Common myeloid progenitor, CD34-positive (primary cell): ENCODE measurements at regions of chr5 and their contacts with region 1.

Region 1: DNA sequence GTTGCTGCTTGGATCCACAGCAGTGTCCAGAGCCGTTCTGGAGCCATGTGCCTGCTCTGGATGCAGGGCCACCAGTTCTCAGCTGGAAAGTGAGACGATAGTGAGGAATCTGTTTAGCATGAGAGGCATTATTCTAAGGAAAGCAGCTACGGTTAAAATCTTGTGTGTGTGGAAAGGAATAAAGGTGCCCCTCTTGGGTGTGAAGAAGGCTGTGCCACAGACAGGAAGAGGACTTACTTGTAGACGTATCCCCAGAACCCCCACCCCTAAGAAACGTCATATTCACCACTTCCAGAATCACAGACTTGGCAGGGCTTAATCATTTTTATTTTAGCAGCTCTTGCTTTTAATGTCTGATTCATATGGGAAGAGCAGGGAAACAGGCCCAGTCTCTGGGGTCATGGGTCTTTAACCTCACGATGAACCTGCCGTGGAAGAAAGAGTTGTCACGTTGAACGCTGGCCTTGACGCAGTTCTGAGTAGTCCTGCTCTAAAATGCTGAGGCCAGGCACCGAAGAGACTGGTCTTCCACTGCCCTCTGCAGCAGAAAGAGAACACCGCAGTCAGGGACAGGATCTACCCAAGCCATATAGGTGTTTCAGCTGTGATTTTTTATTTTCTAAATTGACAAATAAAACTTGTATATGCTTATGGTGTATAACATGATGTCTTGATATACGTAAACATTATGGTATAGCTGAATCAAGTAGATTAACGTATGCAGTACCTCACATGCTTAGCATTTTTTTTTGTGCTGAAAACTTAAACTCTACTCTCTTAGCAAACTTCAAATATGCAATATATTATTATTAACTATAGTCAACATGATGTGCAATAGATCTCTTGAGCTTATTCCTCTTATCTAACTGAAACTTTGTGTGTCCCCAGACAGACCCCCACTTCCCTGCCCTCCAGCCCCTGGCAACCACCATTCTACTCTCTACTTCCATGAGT is 38.8 kb downstream of the CARTPT start:
- DNase-seq: peak; percentile 54 to 76 (median 74)
- H3K4me3 ChIP-seq: peak overlapping the region in 5 of 7 experiments; percentile 5 to 58 (median 42)
- H3K27ac ChIP-seq: no peak overlapping the region
- H3K4me1 ChIP-seq: peaks cover 0 to 4% (median 0%) of the 10 kb centered on the region in 4 experiments
- H3K27me3 ChIP-seq: no peaks in the 10 kb centered on the region

Region 2: GRCh38 chr5:71475788-71476384 is 282.0 kb before region 1 on chr5:
- CTCF ChIA-PET with region 1: interaction called, 19 read pairs
- POLR2A ChIA-PET with region 1: no interaction called
- DNase-seq: peak; percentile 10 to 29 (median 24)
- H3K4me3 ChIP-seq: no peak overlapping the region
- H3K27ac ChIP-seq: no peak overlapping the region
- H3K4me1 ChIP-seq: no peaks in the 10 kb centered on the region
- H3K27me3 ChIP-seq: no peaks in the 10 kb centered on the region

Region 3: GRCh38 chr5:71743155-71743554 is 14.7 kb before region 1 on chr5:
- CTCF ChIA-PET with region 1: interaction called, 14 read pairs
- POLR2A ChIA-PET with region 1: no interaction called
- DNase-seq: no peak
- H3K4me3 ChIP-seq: no peak overlapping the region
- H3K27ac ChIP-seq: no peak overlapping the region
- H3K4me1 ChIP-seq: no peaks in the 10 kb centered on the region
- H3K27me3 ChIP-seq: no peaks in the 10 kb centered on the region